Activated T-helper 2 cell treated with anti-CD3 and anti-CD28 coated beads, Interferon-gamma antibody, Interleukin-2, Interleukin-4, amounts not matched to agents 10 μg/mL and 5 μg/mL and 100 μg/mL, durations not matched to agents 14 hours and 24 hours and 36 hours (primary cell): ENCODE measurements at regions of chr19 and their contacts with region 1.

Region 1: DNA sequence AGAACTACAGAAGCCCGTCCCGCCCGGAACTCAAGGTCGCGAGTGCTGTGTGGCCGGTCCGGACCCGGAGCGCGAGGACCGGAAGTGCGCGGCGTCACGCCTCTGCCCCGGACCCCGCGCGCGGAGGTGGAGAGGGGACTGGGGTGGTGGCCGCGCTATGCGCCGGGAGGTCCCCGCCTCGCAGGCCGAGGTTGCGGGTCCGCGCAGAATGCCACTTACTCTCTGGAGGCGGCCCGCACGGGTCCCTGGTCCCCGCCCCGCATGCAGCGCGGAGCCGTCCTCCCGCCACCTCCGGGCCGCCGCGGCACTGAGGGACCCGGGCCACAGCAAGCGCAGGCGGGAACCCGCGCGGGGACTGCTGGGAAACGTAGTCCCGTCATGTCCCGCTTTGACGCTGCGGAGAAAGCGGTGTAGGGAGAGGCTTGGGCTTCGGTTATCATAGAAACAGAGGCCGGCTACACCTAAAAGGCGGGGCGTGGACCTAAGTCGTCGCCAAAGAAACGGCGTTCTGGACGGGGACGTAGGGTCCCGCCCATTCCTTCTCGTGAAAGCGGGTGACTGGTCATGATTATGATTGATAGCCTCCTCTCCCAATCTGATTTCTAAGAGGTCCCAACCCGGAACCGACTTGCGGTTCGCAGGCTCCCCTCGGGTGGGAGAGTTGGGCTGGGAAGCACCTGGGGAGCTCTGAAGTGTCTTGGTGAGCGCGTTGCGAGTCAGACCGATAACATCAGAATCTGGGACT is at the start of gene ZNF837:
- DNase-seq: peak; percentile 99
- H3K4me3 Mint-ChIP-seq: peak within 1 kb of the TSS; percentile 90
- H3K27ac Mint-ChIP-seq: peak within 1 kb of the TSS; percentile 85
- H3K4me1 Mint-ChIP-seq: peaks cover 25% of the 10 kb centered on the region
- H3K27me3 Mint-ChIP-seq: no peaks in the 10 kb centered on the region
- total RNA-seq, gene ZNF837: 1.1 and 1.5 TPM in 2 replicates

Region 2: DNA sequence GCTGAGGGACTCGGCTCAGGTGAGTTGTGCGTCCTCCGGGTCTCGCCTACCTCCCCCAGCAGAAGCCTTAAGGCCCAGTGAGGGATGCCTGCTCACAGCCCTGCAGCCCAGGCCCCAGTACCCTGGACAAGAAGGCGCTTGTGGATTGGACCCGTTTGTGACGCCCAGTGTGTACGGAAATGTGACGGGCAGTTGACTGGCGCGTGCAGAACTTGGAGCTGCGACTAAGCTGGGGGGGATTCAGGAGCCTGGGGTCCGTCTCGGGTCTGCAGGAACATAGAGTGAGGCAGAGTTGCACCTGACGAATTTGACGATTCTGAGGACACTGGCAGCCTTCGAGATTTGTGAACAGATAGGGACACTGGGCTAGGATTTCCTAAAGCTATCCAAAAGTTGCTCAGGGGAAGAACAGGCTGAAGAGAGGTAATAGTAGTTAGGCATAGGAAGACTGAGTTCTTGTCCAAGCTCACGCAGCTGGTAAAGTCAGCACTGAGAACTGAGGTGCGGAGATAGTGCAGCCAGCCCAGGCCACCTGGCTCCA is 698.6 kb before region 1 on chr19:
- intact Hi-C with region 1: no loop called
- DNase-seq: no peak
- H3K4me3 Mint-ChIP-seq: peak overlapping the region; percentile 93
- H3K27ac Mint-ChIP-seq: peak overlapping the region; percentile 85
- H3K4me1 Mint-ChIP-seq: peaks cover 22% of the 10 kb centered on the region
- H3K27me3 Mint-ChIP-seq: no peaks in the 10 kb centered on the region

Region 3: GRCh38 chr19:58228585-58229254 is 152.2 kb before region 1 on chr19 and contains the start of gene ZNF544:
- intact Hi-C with region 1: loop called (anchors 10 kb)
- DNase-seq: peak; percentile 52
- H3K4me3 Mint-ChIP-seq: peak within 1 kb of the TSS; percentile 92
- H3K27ac Mint-ChIP-seq: peak within 1 kb of the TSS; percentile 91
- H3K4me1 Mint-ChIP-seq: peaks cover 13% of the 10 kb centered on the region
- H3K27me3 Mint-ChIP-seq: no peaks in the 10 kb centered on the region
- total RNA-seq, gene ZNF544: 42.0 and 49.1 TPM in 2 replicates

Region 4: GRCh38 chr19:58305065-58305931 is 75.6 kb before region 1 on chr19 and contains the start of gene ERVK3-1:
- intact Hi-C with region 1: loop called (anchors 2 kb)
- DNase-seq: peak; percentile 93
- H3K4me3 Mint-ChIP-seq: peak within 1 kb of the TSS; percentile 98
- H3K27ac Mint-ChIP-seq: peak within 1 kb of the TSS; percentile 97
- H3K4me1 Mint-ChIP-seq: peaks cover 37% of the 10 kb centered on the region
- H3K27me3 Mint-ChIP-seq: no peaks in the 10 kb centered on the region
- total RNA-seq, gene ERVK3-1: 64.2 and 65.0 TPM in 2 replicates

Region 5: DNA sequence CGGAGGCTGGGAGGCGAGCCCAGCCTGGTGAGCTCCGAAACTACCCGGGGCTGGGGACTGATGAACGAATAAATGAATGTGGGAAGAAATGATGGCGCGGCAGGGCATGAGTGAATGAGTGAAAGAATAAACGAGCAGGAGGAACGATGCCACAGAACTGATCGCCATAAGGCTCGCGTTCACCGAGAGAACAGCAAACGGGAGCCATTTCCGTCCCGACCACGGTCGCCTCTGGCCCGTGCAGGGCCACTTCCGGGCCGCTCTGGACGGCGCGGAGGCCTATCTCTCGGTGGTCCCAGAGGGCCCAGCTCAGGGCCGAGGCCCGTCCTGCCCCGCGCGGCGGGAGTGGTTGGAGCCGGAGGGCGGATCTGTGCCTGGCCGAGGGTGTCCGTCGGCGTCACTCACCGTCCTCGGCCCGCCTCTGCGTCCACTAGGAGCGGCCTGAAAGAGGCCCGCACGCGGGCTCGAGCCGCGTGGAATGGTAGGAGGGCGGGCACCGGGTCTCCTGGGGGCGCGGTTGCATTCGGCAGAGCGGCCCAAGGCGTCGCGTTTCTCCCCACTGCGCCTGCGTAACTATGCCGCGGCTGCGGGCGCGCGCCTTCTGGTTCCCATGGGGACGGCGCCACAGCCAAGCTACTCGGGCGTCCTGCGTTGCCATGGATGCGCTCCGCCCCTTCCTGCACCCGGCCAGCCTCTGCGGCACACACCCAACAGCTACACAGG is 18.5 kb before region 1 on chr19 and contains the start of gene ZNF497:
- intact Hi-C with region 1: loop called (anchors 1 kb)
- DNase-seq: peak; percentile 95
- H3K4me3 Mint-ChIP-seq: peak within 1 kb of the TSS; percentile 91
- H3K27ac Mint-ChIP-seq: peak within 1 kb of the TSS; percentile 88
- H3K4me1 Mint-ChIP-seq: peaks cover 6% of the 10 kb centered on the region
- H3K27me3 Mint-ChIP-seq: no peaks in the 10 kb centered on the region
- total RNA-seq, gene ZNF497: 0.76 and 2.2 TPM in 2 replicates

Region 6: GRCh38 chr19:58408152-58409009 is 27.5 kb after region 1 on chr19 and contains the start of gene ZNF584:
- intact Hi-C with region 1: loop called (anchors 1 kb)
- DNase-seq: peak; percentile 89
- H3K4me3 Mint-ChIP-seq: peak within 1 kb of the TSS; percentile 85
- H3K27ac Mint-ChIP-seq: peak within 1 kb of the TSS; percentile 90
- H3K4me1 Mint-ChIP-seq: peaks cover 32% of the 10 kb centered on the region
- H3K27me3 Mint-ChIP-seq: no peaks in the 10 kb centered on the region
- total RNA-seq, gene ZNF584: 11.2 and 12.2 TPM in 2 replicates

Region 7: GRCh38 chr19:58475714-58476497 is 95.0 kb after region 1 on chr19 and contains the start of gene ZNF446:
- intact Hi-C with region 1: loop called (anchors 2 kb)
- DNase-seq: peak; percentile 97
- H3K4me3 Mint-ChIP-seq: peak within 1 kb of the TSS; percentile 88
- H3K27ac Mint-ChIP-seq: peak within 1 kb of the TSS; percentile 99
- H3K4me1 Mint-ChIP-seq: peaks cover 18% of the 10 kb centered on the region
- H3K27me3 Mint-ChIP-seq: no peaks in the 10 kb centered on the region
- total RNA-seq, gene ZNF446: 6.6 and 6.9 TPM in 2 replicates